Naive thymus-derived CD4-positive, alpha-beta T cell (primary cell): ENCODE measurements at regions of chr7 and their contacts with region 1.

Region 1: DNA sequence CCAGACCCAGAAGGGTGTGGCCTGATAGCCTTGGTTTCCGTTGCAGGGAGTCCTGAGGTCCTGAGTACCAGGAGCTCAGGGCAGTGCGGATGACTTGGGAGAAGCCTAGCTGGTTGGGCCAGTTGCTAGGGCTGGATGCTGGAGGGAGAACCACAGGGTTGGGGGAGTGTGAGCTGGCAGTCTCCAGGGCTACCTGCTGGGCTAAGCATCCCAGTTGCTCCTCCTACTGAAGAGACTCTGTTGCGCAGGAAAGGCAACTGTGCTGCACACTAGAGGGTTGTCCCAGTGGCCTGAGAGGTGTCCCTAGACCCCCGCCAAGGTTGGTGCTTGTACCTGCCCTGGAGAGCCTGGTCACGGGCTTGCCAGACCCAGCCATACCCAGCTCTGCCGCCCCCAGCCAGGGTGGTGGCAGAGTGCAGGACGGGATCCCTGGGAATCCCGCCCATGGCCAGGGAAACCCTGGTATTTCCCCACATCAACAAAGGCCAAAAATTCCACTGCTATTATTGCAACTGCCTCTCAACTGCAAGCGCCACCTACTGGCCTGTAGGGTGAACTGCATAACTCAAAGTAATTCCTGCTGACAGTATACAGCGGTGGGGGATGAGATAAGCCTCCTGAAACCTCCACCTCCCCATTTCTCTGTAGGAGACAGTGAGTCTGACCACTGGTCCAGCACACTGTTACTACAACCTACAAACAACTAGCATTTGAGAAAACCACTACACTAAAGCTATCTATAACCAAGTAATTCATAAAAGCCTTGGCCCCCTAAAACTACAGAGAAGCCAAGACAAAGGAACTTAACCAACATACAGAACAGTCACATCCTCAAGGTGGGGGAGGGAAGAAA is 67.6 kb upstream of the DDC start:
- DNase-seq: peak; percentile 27 to 64 (median 52)
- ATAC-seq: peak; percentile 88
- H3K4me3 ChIP-seq: no peak overlapping the region
- H3K4me3 Mint-ChIP-seq: no peak overlapping the region
- H3K27ac ChIP-seq: no peak overlapping the region
- H3K27ac Mint-ChIP-seq: peak overlapping the region in 1 of 9 donors; percentile 29
- H3K4me1 ChIP-seq: no peaks in the 10 kb centered on the region
- H3K4me1 Mint-ChIP-seq: peaks cover 0 to 6% (median 0%) of the 10 kb centered on the region in 7 donors
- H3K27me3 ChIP-seq: no peaks in the 10 kb centered on the region
- H3K27me3 Mint-ChIP-seq: peaks cover 0 to 37% (median 0%) of the 10 kb centered on the region in 5 donors

Region 2: GRCh38 chr7:50142425-50143017 is 490.3 kb before region 1 on chr7:
- CTCF ChIA-PET with region 1: no interaction called
- POLR2A ChIA-PET with region 1: no interaction called
- intact Hi-C with region 1: loop called (anchors 1 to 2 kb)
- DNase-seq: peak in 7 of 9 donors; percentile 43 to 72 (median 62)
- ATAC-seq: peak; percentile 83
- H3K4me3 ChIP-seq: no peak overlapping the region
- H3K4me3 Mint-ChIP-seq: peak overlapping the region in 9 of 10 donors; percentile 13 to 86 (median 64)
- H3K27ac ChIP-seq: peak overlapping the region; percentile 55
- H3K27ac Mint-ChIP-seq: peak overlapping the region in 8 of 9 donors; percentile 16 to 91 (median 62)
- H3K4me1 ChIP-seq: peaks cover 3% of the 10 kb centered on the region in 2 donors
- H3K4me1 Mint-ChIP-seq: peaks cover 0 to 37% (median 12%) of the 10 kb centered on the region in 7 donors
- H3K27me3 ChIP-seq: no peaks in the 10 kb centered on the region
- H3K27me3 Mint-ChIP-seq: peaks cover 0 to 18% (median 0%) of the 10 kb centered on the region in 5 donors

Region 3: DNA sequence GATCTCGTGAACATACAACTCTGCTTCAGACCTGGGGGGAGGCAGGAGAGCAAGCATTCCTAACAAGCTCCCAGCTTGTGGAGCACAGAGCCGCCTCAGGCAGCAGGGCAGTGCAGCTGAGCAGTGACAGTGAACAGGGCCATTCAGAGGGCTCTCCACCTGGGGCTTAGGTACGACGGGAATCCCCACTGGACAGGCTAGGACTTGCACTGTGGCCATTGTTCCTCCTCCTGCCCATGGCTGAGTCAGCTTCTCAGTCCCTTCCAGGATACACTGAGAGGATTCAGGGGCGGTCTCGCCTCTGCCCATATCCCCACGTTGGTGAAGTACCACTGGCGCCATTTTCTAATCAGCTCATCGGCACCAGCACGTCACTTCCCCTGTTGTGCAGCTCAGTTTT is 253.7 kb before region 1 on chr7:
- CTCF ChIA-PET with region 1: no interaction called
- POLR2A ChIA-PET with region 1: no interaction called
- intact Hi-C with region 1: no loop called
- DNase-seq: no peak
- ATAC-seq: peak; percentile 14
- H3K4me3 ChIP-seq: no peak overlapping the region
- H3K4me3 Mint-ChIP-seq: peak overlapping the region in 9 of 10 donors; percentile 5 to 65 (median 27)
- H3K27ac ChIP-seq: peak overlapping the region; percentile 69
- H3K27ac Mint-ChIP-seq: peak overlapping the region in 7 of 9 donors; percentile 60 to 99 (median 78)
- H3K4me1 ChIP-seq: peaks cover 29 to 72% of the 10 kb centered on the region in 2 donors
- H3K4me1 Mint-ChIP-seq: peaks cover 60 to 100% (median 99%) of the 10 kb centered on the region in 7 donors
- H3K27me3 ChIP-seq: no peaks in the 10 kb centered on the region
- H3K27me3 Mint-ChIP-seq: no peaks in the 10 kb centered on the region

Region 4: GRCh38 chr7:50528266-50529092 is 104.3 kb before region 1 on chr7:
- CTCF ChIA-PET with region 1: no interaction called
- POLR2A ChIA-PET with region 1: no interaction called
- intact Hi-C with region 1: no loop called
- DNase-seq: no peak
- ATAC-seq: no peak
- H3K4me3 ChIP-seq: no peak overlapping the region
- H3K4me3 Mint-ChIP-seq: no peak overlapping the region
- H3K27ac ChIP-seq: no peak overlapping the region
- H3K27ac Mint-ChIP-seq: no peak overlapping the region
- H3K4me1 ChIP-seq: no peaks in the 10 kb centered on the region
- H3K4me1 Mint-ChIP-seq: peaks cover 0 to 5% (median 0%) of the 10 kb centered on the region in 7 donors
- H3K27me3 ChIP-seq: no peaks in the 10 kb centered on the region
- H3K27me3 Mint-ChIP-seq: peaks cover 4 to 32% (median 13%) of the 10 kb centered on the region in 5 donors

Region 5: DNA sequence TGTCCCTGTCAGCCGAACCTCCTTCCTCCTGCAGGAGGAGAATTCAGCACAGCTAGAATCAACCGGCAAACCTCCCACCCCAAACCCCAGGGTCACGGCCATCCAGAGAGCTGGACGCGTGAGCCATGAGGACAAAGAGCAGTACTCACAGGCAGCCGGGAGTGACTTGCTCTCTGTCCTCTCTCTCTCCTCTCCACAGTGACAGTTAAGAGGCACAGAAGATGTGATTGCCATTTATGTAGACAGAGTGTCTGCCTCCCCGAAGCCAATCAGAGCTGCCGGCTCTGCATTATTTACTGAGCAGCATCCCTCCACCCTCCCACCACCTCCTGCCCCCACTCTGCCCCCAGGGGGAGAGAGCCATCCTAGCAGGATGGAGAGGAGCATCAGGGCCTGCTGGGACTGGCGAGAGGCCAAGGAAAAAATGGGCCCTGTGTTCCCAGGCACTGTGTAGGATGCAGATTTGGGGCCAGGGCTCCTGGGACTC is 71.9 kb before region 1 on chr7:
- CTCF ChIA-PET with region 1: no interaction called
- POLR2A ChIA-PET with region 1: no interaction called
- intact Hi-C with region 1: no loop called
- DNase-seq: no peak
- ATAC-seq: no peak
- H3K4me3 ChIP-seq: no peak overlapping the region
- H3K4me3 Mint-ChIP-seq: no peak overlapping the region
- H3K27ac ChIP-seq: no peak overlapping the region
- H3K27ac Mint-ChIP-seq: no peak overlapping the region
- H3K4me1 ChIP-seq: no peaks in the 10 kb centered on the region
- H3K4me1 Mint-ChIP-seq: peaks cover 0 to 1% (median 0%) of the 10 kb centered on the region in 7 donors
- H3K27me3 ChIP-seq: no peaks in the 10 kb centered on the region
- H3K27me3 Mint-ChIP-seq: peaks cover 8 to 37% (median 14%) of the 10 kb centered on the region in 5 donors

Region 6: GRCh38 chr7:50584914-50585361 is 47.8 kb before region 1 on chr7:
- CTCF ChIA-PET with region 1: no interaction called
- POLR2A ChIA-PET with region 1: no interaction called
- intact Hi-C with region 1: no loop called
- DNase-seq: no peak
- ATAC-seq: no peak
- H3K4me3 ChIP-seq: no peak overlapping the region
- H3K4me3 Mint-ChIP-seq: no peak overlapping the region
- H3K27ac ChIP-seq: no peak overlapping the region
- H3K27ac Mint-ChIP-seq: no peak overlapping the region
- H3K4me1 ChIP-seq: no peaks in the 10 kb centered on the region
- H3K4me1 Mint-ChIP-seq: no peaks in the 10 kb centered on the region
- H3K27me3 ChIP-seq: no peaks in the 10 kb centered on the region
- H3K27me3 Mint-ChIP-seq: peaks cover 8 to 22% (median 12%) of the 10 kb centered on the region in 5 donors

Region 7: GRCh38 chr7:50595491-50596102 is 37.2 kb before region 1 on chr7:
- CTCF ChIA-PET with region 1: interaction called, 4 read pairs
- POLR2A ChIA-PET with region 1: no interaction called
- intact Hi-C with region 1: loop called in 1 of 2 experiments (anchors 1 kb)
- DNase-seq: no peak
- ATAC-seq: peak; percentile 56
- H3K4me3 ChIP-seq: no peak overlapping the region
- H3K4me3 Mint-ChIP-seq: peak overlapping the region in 1 of 10 donors; percentile 29
- H3K27ac ChIP-seq: no peak overlapping the region
- H3K27ac Mint-ChIP-seq: no peak overlapping the region
- H3K4me1 ChIP-seq: no peaks in the 10 kb centered on the region
- H3K4me1 Mint-ChIP-seq: peaks cover 0 to 30% (median 0%) of the 10 kb centered on the region in 7 donors
- H3K27me3 ChIP-seq: no peaks in the 10 kb centered on the region
- H3K27me3 Mint-ChIP-seq: peaks cover 0 to 12% (median 1%) of the 10 kb centered on the region in 5 donors